ENCODE measurements at regions of chr10 and their contacts with region 1.

Region 1: GRCh38 chr10:101141616-101142532 is 10.8 kb downstream of the TLX1 start:
- DNase-seq: peak; percentile 77
- H3K4me3 ChIP-seq: no peak overlapping the region
- H3K27ac ChIP-seq: no peak overlapping the region
- H3K4me1 ChIP-seq: no peaks in the 10 kb centered on the region
- H3K27me3 ChIP-seq: peaks cover 90 to 94% of the 10 kb centered on the region in 2 experiments
- CTCF ChIP-seq: peak; percentile 96 to 98
- POLR2A ChIP-seq: no peak

Region 2: DNA sequence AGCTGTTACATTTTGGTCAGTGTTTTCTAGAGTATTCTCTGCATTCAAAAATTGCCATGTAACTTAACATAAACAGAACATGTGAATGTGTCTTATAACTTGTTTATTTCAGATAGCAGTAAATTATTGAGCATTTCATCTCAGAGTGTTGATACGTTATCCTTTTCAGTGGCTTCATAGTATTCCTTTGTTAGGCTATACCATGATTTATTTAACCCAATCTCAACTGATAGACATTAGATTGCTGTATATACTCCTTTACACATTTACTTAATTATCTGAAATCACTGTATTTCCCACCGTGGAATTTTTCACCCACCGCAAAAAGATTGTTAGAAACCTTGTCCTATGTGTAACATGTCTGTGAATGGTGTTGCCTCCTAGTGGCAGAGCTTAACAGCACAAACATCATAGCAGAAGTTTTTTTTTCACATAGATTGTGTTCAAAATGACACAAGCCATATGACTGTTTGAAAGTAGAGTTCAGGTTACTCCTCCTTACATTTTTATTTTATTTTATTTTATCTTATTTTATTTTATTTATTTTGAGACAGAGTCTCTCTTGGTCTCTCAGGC is 207.7 kb before region 1 on chr10:
- CTCF ChIA-PET with region 1: no interaction called
- POLR2A ChIA-PET with region 1: no interaction called
- dilution Hi-C with region 1: no loop called
- intact Hi-C with region 1: no loop called
- DNase-seq: no peak
- H3K4me3 ChIP-seq: no peak overlapping the region
- H3K27ac ChIP-seq: no peak overlapping the region
- H3K4me1 ChIP-seq: no peaks in the 10 kb centered on the region
- H3K27me3 ChIP-seq: no peaks in the 10 kb centered on the region
- CTCF ChIP-seq: peak; percentile 33 to 39
- POLR2A ChIP-seq: no peak

Region 3: GRCh38 chr10:101042667-101043355 is 99.1 kb before region 1 on chr10:
- CTCF ChIA-PET with region 1: interaction called, 74 read pairs
- POLR2A ChIA-PET with region 1: no interaction called
- dilution Hi-C with region 1: no loop called
- intact Hi-C with region 1: no loop called
- DNase-seq: peak; percentile 97
- H3K4me3 ChIP-seq: peak overlapping the region; percentile 12 to 50 (median 38)
- H3K27ac ChIP-seq: peak overlapping the region; percentile 71
- H3K4me1 ChIP-seq: peaks cover 11% of the 10 kb centered on the region
- H3K27me3 ChIP-seq: peaks cover 17% of the 10 kb centered on the region in 2 experiments
- CTCF ChIP-seq: no peak
- POLR2A ChIP-seq: peak; percentile 64

Region 4: GRCh38 chr10:101060036-101060950 is 81.6 kb before region 1 on chr10:
- CTCF ChIA-PET with region 1: interaction called, 34 read pairs
- POLR2A ChIA-PET with region 1: interaction called, 3 read pairs
- dilution Hi-C with region 1: no loop called
- intact Hi-C with region 1: loop called (anchors 1 kb)
- DNase-seq: peak; percentile 94
- H3K4me3 ChIP-seq: peak overlapping the region; percentile 89 to 97 (median 96)
- H3K27ac ChIP-seq: peak overlapping the region; percentile 99
- H3K4me1 ChIP-seq: peaks cover 36% of the 10 kb centered on the region
- H3K27me3 ChIP-seq: no peaks in the 10 kb centered on the region
- CTCF ChIP-seq: peak; percentile 89
- POLR2A ChIP-seq: peak; percentile 8

Region 5: GRCh38 chr10:101075775-101076174 is 66.1 kb before region 1 on chr10:
- CTCF ChIA-PET with region 1: interaction called, 10 read pairs
- POLR2A ChIA-PET with region 1: no interaction called
- dilution Hi-C with region 1: no loop called
- intact Hi-C with region 1: no loop called
- DNase-seq: no peak
- H3K4me3 ChIP-seq: no peak overlapping the region
- H3K27ac ChIP-seq: no peak overlapping the region
- H3K4me1 ChIP-seq: no peaks in the 10 kb centered on the region
- H3K27me3 ChIP-seq: peaks cover 15 to 29% of the 10 kb centered on the region in 2 experiments
- CTCF ChIP-seq: no peak
- POLR2A ChIP-seq: no peak

Region 6: DNA sequence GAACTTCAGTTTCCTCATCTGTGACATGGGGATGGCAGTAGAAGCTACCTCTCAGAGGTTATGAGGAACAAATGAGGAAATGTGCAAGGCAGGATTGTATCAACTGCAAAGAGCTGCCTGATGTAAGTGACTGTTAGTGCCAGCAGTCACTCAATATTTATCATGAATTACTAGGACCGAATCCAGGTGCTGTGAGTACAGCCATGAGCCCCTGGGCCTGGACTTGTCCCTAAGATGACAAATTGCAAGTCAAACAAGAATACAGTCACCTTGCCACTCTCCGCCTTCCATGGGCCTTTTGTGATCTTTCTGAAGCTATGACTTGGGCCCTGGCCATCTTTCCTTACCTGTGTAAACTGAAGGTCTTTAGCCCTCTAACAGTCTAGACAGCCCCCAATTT is 38.4 kb before region 1 on chr10:
- CTCF ChIA-PET with region 1: interaction called, 496 read pairs
- POLR2A ChIA-PET with region 1: no interaction called
- dilution Hi-C with region 1: no loop called
- intact Hi-C with region 1: no loop called
- DNase-seq: no peak
- H3K4me3 ChIP-seq: no peak overlapping the region
- H3K27ac ChIP-seq: no peak overlapping the region
- H3K4me1 ChIP-seq: no peaks in the 10 kb centered on the region
- H3K27me3 ChIP-seq: peaks cover 3 to 19% of the 10 kb centered on the region in 2 experiments
- CTCF ChIP-seq: no peak
- POLR2A ChIP-seq: no peak

Region 7: GRCh38 chr10:101130984-101131961 is 10.6 kb before region 1 on chr10 and contains the start of gene TLX1:
- CTCF ChIA-PET with region 1: interaction called, 26 read pairs
- POLR2A ChIA-PET with region 1: no interaction called
- dilution Hi-C with region 1: no loop called
- intact Hi-C with region 1: no loop called
- DNase-seq: no peak
- H3K4me3 ChIP-seq: no peak within 1 kb of the TSS
- H3K27ac ChIP-seq: no peak within 1 kb of the TSS
- H3K4me1 ChIP-seq: peaks cover 4% of the 10 kb centered on the region
- H3K27me3 ChIP-seq: peaks cover 90 to 99% of the 10 kb centered on the region in 2 experiments
- CTCF ChIP-seq: no peak
- POLR2A ChIP-seq: no peak
- total RNA-seq, gene TLX1: not detected in 2 replicates

Region 8: DNA sequence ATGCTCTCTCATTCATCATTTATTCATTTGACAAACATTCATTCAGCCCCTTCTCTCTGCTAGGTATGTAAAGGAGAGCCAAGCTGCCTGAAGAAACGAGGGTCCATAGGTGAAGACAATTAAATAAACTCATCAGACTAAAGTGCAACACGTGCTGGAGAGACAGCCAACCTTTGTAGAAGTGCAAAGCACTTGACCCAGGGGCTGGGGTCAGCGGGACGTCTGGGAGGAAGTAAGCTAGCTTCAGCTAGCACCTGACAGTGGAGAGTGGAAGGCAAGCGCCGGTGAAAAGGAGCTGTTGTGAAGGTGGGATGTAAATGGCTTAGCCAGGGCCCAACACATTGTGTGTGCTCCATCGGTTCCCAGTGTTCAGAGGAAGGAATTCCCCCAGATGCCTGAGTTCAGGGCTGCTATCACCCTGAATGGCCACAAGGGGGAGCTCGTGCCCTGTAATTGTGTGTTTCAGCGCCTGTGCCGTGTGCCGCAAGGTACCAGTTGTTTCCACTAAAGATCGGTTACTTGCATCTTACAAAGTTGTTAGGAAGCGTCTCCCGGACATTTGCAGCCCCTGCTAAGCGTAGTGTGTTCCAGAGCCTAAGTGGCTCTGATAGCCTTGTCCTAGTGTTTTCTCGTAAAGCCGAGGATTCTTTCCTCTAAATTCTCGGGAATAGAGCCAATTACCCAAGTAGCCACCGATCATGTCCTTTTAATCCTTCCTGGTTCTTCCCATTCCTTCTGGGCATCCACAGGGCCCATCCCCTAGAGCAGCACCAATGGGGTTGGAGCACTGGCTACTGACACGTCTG is 19.8 kb after region 1 on chr10:
- CTCF ChIA-PET with region 1: interaction called, 32 read pairs
- POLR2A ChIA-PET with region 1: no interaction called
- dilution Hi-C with region 1: no loop called
- intact Hi-C with region 1: no loop called
- DNase-seq: peak; percentile 74
- H3K4me3 ChIP-seq: no peak overlapping the region
- H3K27ac ChIP-seq: no peak overlapping the region
- H3K4me1 ChIP-seq: no peaks in the 10 kb centered on the region
- H3K27me3 ChIP-seq: peaks cover 25 to 34% of the 10 kb centered on the region in 2 experiments
- CTCF ChIP-seq: peak; percentile 94 to 98
- POLR2A ChIP-seq: no peak